GM12878 (cell line): ENCODE measurements at regions of chr19 and their contacts with region 1.

Region 1: DNA sequence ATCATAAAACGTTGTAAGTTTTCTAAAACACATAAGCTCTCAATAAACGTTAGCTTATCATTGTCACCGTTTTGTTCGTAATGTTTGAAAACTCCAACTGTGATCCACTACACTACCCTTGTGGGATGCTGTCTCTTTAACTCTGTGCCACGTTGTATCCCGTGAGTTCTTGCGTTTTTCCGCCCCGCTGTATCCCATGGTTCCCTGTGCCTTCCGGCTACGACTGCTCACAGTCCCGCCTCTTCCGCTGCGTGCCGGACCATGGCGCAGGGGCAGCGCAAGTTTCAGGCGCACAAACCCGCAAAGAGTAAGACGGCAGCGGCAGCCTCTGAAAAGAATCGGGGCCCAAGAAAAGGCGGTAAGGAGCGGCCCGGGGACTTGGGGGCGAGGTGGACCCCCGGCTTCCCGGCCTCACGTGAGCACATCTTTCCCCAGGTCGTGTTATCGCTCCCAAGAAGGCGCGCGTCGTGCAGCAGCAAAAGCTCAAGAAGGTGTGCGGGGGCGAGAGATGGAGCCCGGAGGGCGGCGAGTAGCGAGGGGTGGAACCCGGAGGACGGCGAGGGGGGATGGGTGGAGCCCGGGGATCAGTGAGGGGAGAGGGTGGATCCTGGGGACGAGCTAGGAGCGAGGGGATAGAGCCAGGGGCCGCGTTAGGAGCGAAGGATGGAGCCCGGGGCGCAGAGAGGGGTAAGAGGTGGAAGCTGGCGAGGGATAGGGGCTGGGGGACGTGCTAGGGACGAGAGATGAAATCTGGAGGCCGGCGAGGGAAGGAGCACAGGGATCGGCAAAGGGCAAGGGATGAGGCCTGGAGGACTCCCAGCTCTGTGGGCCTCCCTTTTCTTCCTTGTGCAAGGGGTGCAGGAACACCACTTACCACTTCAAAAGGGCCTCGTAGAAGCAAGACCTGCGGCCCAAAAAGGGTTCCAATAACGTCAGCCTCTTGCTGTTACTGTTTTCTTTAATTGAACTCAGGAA is at the start of gene C19orf53:
- DNase-seq: peak; percentile 83
- ATAC-seq: peak; percentile 100
- H3K4me3 ChIP-seq: peak within 1 kb of the TSS; percentile 95
- H3K27ac ChIP-seq: peak within 1 kb of the TSS; percentile 77
- H3K4me1 ChIP-seq: peaks cover 3% of the 10 kb centered on the region
- H3K27me3 ChIP-seq: no peaks in the 10 kb centered on the region
- CTCF ChIP-seq: no peak
- EP300 ChIP-seq: no peak
- POLR2A ChIP-seq: peak; percentile 99
- RAD21 ChIP-seq: no peak
- polyA plus RNA-seq, gene C19orf53: 392 to 449 TPM

Region 2: DNA sequence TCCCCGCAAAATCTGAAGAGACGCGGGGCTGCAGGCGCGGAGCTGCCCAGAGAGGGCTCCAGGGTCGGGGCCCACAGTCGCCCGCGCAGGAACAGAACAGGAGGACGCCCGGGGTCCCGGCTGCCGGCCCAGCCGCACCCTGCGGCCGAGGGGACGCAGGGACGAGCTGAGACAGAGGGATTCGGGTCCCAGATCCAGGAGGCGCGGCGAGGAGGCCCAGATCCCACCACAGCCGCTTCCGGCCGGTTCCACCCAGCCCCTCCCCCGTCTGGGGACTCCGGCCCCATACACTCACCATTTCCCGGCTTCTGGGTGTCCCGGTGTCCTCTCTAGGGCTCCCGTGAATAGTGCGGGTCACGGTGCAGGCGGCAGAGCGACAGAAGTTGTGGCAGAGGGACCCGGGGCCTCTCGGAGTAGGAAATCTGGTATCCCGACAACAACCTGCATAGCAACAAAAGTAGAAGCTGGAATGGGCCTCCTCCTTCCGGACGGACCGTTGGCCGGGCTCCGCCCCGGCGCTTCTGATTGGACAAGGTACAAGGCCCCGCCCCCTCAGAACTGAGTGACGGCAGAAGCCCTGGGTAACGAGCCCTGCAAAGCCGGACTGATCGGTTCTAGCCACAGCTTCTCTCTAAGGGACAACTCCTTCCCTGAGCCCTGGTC is 1634.5 kb before region 1 on chr19 and contains the start of gene ZNF20:
- CTCF ChIA-PET with region 1: no interaction called
- POLR2A ChIA-PET with region 1: no interaction called
- RAD21 ChIA-PET with region 1: no interaction called
- SMC1A ChIA-PET with region 1: no interaction called
- in situ Hi-C with region 1: no loop called
- intact Hi-C with region 1: no loop called
- DNase-seq: peak; percentile 67
- ATAC-seq: peak; percentile 99
- H3K4me3 ChIP-seq: peak within 1 kb of the TSS; percentile 96
- H3K27ac ChIP-seq: peak within 1 kb of the TSS; percentile 85
- H3K4me1 ChIP-seq: peaks cover 3% of the 10 kb centered on the region
- H3K27me3 ChIP-seq: no peaks in the 10 kb centered on the region
- CTCF ChIP-seq: no peak
- EP300 ChIP-seq: no peak
- POLR2A ChIP-seq: peak; percentile 54; the same call in 1 of the 2 replicates
- RAD21 ChIP-seq: no peak
- polyA plus RNA-seq, gene ZNF20: 2.5 to 2.8 TPM

Region 3: GRCh38 chr19:13707915-13708314 is 66.6 kb before region 1 on chr19:
- CTCF ChIA-PET with region 1: no interaction called
- POLR2A ChIA-PET with region 1: no interaction called
- RAD21 ChIA-PET with region 1: no interaction called
- SMC1A ChIA-PET with region 1: no interaction called
- in situ Hi-C with region 1: no loop called
- intact Hi-C with region 1: no loop called
- DNase-seq: no peak
- ATAC-seq: no peak
- H3K4me3 ChIP-seq: no peak overlapping the region
- H3K27ac ChIP-seq: no peak overlapping the region
- H3K4me1 ChIP-seq: no peaks in the 10 kb centered on the region
- H3K27me3 ChIP-seq: no peaks in the 10 kb centered on the region; a peak in 1 of 4 replicates
- CTCF ChIP-seq: no peak
- EP300 ChIP-seq: no peak
- POLR2A ChIP-seq: no peak
- RAD21 ChIP-seq: no peak

Region 4: GRCh38 chr19:13731147-13731964 is 43.1 kb before region 1 on chr19:
- CTCF ChIA-PET with region 1: interaction called, 4 read pairs
- POLR2A ChIA-PET with region 1: interaction called, 6 read pairs
- RAD21 ChIA-PET with region 1: interaction called, 12 read pairs
- SMC1A ChIA-PET with region 1: interaction called, 3 read pairs
- in situ Hi-C with region 1: no loop called
- intact Hi-C with region 1: no loop called
- DNase-seq: peak; percentile 72
- ATAC-seq: peak; percentile 100
- H3K4me3 ChIP-seq: peak overlapping the region; percentile 77
- H3K27ac ChIP-seq: peak overlapping the region; percentile 81
- H3K4me1 ChIP-seq: peaks cover 15% of the 10 kb centered on the region
- H3K27me3 ChIP-seq: no peaks in the 10 kb centered on the region
- CTCF ChIP-seq: no peak
- EP300 ChIP-seq: peak; percentile 62 to 84; a peak in 3 of 4 replicates
- POLR2A ChIP-seq: peak; percentile 80
- RAD21 ChIP-seq: no peak

Region 5: DNA sequence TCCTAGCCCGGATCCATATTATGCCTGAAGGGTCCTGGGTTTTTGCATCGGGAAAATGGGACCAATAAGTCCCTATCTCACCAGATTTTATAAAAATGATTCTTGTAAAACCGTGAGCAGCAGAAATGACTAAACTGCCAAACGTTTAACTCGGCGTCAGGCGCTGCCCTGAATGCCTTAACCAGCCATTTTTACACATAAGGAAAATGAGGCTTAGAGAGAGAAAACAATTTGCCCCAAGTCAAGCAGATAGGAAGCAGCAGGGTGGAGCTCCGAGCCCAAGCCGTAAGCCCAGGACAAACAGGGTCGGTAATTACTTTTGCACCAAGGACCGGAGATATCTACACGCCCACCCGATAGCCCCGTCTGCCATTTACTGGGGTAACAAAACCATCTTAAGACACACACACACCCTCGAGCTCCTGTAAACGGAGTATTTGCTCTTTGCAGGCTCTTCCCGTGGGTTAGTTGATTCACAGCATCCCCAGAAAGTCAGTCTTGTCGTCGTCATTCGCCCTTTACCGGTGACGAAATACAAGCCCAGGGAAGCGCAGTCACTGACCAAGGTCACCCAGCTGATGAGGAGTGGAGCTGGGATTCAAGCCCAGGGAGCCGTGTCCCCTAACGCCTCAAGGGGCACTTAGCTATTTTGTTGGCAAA is 26.2 kb before region 1 on chr19:
- CTCF ChIA-PET with region 1: interaction called, 3 read pairs
- POLR2A ChIA-PET with region 1: interaction called, 20 read pairs
- RAD21 ChIA-PET with region 1: interaction called, 5 read pairs
- SMC1A ChIA-PET with region 1: interaction called, 20 read pairs
- in situ Hi-C with region 1: no loop called
- intact Hi-C with region 1: no loop called
- DNase-seq: no peak
- ATAC-seq: peak; percentile 7
- H3K4me3 ChIP-seq: peak overlapping the region; percentile 84
- H3K27ac ChIP-seq: peak overlapping the region; percentile 72
- H3K4me1 ChIP-seq: peaks cover 5% of the 10 kb centered on the region
- H3K27me3 ChIP-seq: no peaks in the 10 kb centered on the region
- CTCF ChIP-seq: no peak
- EP300 ChIP-seq: no peak
- POLR2A ChIP-seq: no peak
- RAD21 ChIP-seq: no peak

Region 6: GRCh38 chr19:13764101-13764807 is 10.2 kb before region 1 on chr19 and contains the start of gene MRI1:
- CTCF ChIA-PET with region 1: interaction called, 6 read pairs
- POLR2A ChIA-PET with region 1: interaction called, 17 read pairs
- RAD21 ChIA-PET with region 1: interaction called, 7 read pairs
- SMC1A ChIA-PET with region 1: interaction called, 6 read pairs
- in situ Hi-C with region 1: no loop called
- intact Hi-C with region 1: no loop called
- DNase-seq: no peak
- ATAC-seq: peak; percentile 91
- H3K4me3 ChIP-seq: peak within 1 kb of the TSS; percentile 83
- H3K27ac ChIP-seq: peak within 1 kb of the TSS; percentile 64
- H3K4me1 ChIP-seq: no peaks in the 10 kb centered on the region
- H3K27me3 ChIP-seq: no peaks in the 10 kb centered on the region
- CTCF ChIP-seq: no peak
- EP300 ChIP-seq: no peak
- POLR2A ChIP-seq: peak; percentile 83
- RAD21 ChIP-seq: no peak
- polyA plus RNA-seq, gene MRI1: 5.4 to 7.9 TPM

Region 7: GRCh38 chr19:13784731-13785452 is 10.4 kb after region 1 on chr19:
- CTCF ChIA-PET with region 1: interaction called, 6 read pairs
- POLR2A ChIA-PET with region 1: interaction called, 14 read pairs
- RAD21 ChIA-PET with region 1: interaction called, 11 read pairs
- SMC1A ChIA-PET with region 1: interaction called, 14 read pairs
- in situ Hi-C with region 1: no loop called
- intact Hi-C with region 1: no loop called
- DNase-seq: no peak
- ATAC-seq: peak; percentile 91
- H3K4me3 ChIP-seq: no peak overlapping the region
- H3K27ac ChIP-seq: no peak overlapping the region
- H3K4me1 ChIP-seq: peaks cover 26% of the 10 kb centered on the region
- H3K27me3 ChIP-seq: no peaks in the 10 kb centered on the region
- CTCF ChIP-seq: peak; percentile 47 to 79 (median 74)
- EP300 ChIP-seq: no peak
- POLR2A ChIP-seq: no peak
- RAD21 ChIP-seq: peak; percentile 76

Region 8: DNA sequence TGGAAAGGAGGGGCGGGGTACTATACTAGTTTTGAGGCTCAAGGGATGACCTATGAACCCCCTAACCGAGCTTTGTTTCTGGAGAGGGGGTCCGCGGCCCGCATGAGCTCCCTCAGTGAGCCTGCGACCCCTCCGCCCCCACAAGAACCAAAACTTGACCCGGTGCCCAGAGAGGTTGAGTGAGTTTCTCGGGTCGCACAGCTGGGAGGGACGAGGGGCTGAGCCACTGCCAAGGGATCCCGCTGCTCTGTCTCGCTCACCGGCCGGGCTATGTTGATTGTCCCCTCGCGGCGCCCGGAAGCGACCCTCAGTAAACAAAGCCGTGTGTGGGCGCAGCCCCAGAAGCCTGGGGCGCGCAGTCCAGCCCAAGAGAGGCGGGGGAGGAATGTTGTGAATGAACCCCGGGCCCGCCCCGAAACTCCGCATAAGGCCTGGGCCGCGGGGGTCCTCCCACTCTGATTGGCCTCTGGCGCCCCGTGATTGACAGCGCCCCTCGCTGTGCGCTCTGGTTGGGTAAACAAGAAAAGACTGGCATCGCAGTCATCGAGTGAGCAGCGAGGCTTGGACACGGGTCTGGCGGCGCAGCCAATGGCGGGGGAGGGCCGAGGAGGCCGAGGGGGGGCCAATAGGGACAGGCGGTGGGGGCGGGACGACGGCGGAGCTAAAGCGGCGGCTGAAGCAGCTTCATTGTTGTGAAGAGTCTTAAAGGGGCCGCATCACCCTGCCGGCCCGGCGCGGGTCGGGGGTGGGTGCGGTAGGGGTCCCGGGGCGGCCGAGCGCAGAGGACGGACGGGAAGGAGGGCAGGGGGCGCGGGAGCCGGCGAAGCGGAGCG is 20.5 kb after region 1 on chr19 and contains the start of gene ZSWIM4:
- CTCF ChIA-PET with region 1: interaction called, 4 read pairs
- POLR2A ChIA-PET with region 1: interaction called, 11 read pairs
- RAD21 ChIA-PET with region 1: interaction called, 9 read pairs
- SMC1A ChIA-PET with region 1: interaction called, 7 read pairs
- in situ Hi-C with region 1: no loop called
- intact Hi-C with region 1: no loop called
- DNase-seq: peak; percentile 95
- ATAC-seq: peak; percentile 97
- H3K4me3 ChIP-seq: peak within 1 kb of the TSS; percentile 75
- H3K27ac ChIP-seq: peak within 1 kb of the TSS; percentile 84
- H3K4me1 ChIP-seq: peaks cover 16% of the 10 kb centered on the region
- H3K27me3 ChIP-seq: no peaks in the 10 kb centered on the region
- CTCF ChIP-seq: no peak
- EP300 ChIP-seq: no peak
- POLR2A ChIP-seq: peak; percentile 48
- RAD21 ChIP-seq: no peak
- polyA plus RNA-seq, gene ZSWIM4: not detected

Region 9: DNA sequence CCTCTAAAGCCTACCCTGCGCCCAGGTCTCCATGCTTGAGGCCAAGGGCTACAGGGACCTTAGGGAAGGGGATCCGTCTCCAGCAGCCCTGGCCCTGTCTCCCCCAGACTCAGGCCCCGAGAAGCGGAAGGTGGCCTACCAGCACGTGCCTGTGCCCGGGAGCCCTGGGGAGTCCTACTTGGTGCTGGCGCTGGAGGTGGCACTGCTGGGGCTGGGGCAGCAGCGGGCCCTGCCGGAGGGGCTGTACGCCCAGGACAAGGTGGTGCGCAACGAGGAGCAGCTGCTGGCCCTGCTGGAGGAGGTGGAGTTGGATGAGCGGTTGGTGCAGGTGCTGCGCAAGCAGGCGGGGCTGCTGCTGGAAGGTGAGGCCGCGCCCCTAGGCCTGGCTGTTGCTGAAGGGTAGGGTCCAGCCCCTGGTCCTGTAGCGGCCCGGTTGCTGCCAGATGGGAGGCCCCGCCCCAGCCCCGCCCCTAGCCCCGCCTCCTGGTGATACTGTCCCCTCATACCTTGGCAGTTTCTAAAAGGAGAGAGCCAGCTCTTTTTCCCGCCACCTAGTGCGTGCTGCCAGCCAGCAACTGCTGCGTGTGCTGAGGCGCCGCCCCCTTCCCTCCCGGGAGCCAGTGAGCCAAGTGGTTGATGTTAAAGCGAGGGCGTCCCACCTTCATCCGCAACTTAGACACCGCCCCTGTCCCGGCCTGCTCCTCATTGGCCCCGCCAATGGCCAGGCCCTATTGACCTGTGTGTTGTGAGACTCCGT is 43.3 kb after region 1 on chr19:
- CTCF ChIA-PET with region 1: no interaction called
- POLR2A ChIA-PET with region 1: no interaction called
- RAD21 ChIA-PET with region 1: no interaction called
- SMC1A ChIA-PET with region 1: no interaction called
- in situ Hi-C with region 1: no loop called
- intact Hi-C with region 1: no loop called
- DNase-seq: no peak
- ATAC-seq: no peak
- H3K4me3 ChIP-seq: no peak overlapping the region
- H3K27ac ChIP-seq: no peak overlapping the region; the same call in 1 of the 2 replicates
- H3K4me1 ChIP-seq: no peaks in the 10 kb centered on the region
- H3K27me3 ChIP-seq: no peaks in the 10 kb centered on the region
- CTCF ChIP-seq: no peak
- EP300 ChIP-seq: no peak
- POLR2A ChIP-seq: 0 out of 2 replicates have a peak, but pooled peaks have one; percentile 35
- RAD21 ChIP-seq: no peak